ENCODE measurements at regions of chr2 and their contacts with region 1.

Region 1: GRCh38 chr2:221573430-221574230 is 1.5 kb upstream of the EPHA4 start:
- DNase-seq: peak; percentile 83 to 96
- ATAC-seq: peak; percentile 92
- H3K4me3 ChIP-seq: peak overlapping the region; percentile 46 to 66
- H3K27ac ChIP-seq: peak overlapping the region in 1 of 2 donors; percentile 41
- H3K4me1 ChIP-seq: no peaks in the 10 kb centered on the region
- H3K27me3 ChIP-seq: no peaks in the 10 kb centered on the region

Region 2: DNA sequence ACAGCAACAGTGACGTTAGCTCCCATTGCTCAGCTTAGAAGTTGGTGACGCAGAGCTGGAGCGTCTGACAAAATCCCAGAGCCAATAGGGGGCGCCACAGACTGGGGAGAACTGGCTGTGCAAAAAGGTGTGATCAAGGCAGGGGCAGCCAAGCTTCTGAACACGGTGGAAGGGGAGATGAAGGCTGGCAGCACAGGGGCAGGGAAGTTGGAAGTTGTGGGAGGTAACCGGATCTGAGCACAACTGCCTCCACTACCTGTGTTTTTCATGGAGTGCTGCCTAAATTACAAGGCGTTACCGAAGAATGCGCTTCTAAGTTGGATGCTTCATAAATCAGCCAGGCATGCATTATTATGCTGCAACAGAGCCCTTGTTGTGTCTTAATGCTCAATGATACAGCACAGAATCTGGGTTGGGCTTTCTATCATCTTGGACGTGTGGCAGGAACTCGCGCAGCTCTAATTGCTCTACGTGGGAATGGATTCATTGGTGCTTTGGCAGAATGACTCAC is 1576.2 kb before region 1 on chr2:
- intact Hi-C with region 1: loop called in 1 of 2 experiments (anchors 5 kb)
- DNase-seq: peak; percentile 63 to 82
- ATAC-seq: no peak
- H3K4me3 ChIP-seq: no peak overlapping the region
- H3K27ac ChIP-seq: no peak overlapping the region
- H3K4me1 ChIP-seq: peaks cover 0 to 1% of the 10 kb centered on the region in 2 donors
- H3K27me3 ChIP-seq: no peaks in the 10 kb centered on the region

Region 3: GRCh38 chr2:221104361-221104811 is 469.2 kb before region 1 on chr2:
- intact Hi-C with region 1: loop called in 1 of 2 experiments (anchors 5 kb)
- DNase-seq: peak; percentile 90 to 91
- ATAC-seq: peak; percentile 90
- H3K4me3 ChIP-seq: no peak overlapping the region
- H3K27ac ChIP-seq: peak overlapping the region in 1 of 2 donors; percentile 22
- H3K4me1 ChIP-seq: no peaks in the 10 kb centered on the region
- H3K27me3 ChIP-seq: no peaks in the 10 kb centered on the region

Region 4: GRCh38 chr2:221444106-221444505 is 129.5 kb before region 1 on chr2:
- intact Hi-C with region 1: loop called in 1 of 2 experiments (anchors 10 kb)
- DNase-seq: peak in 1 of 2 donors; percentile 49
- ATAC-seq: peak; percentile 59
- H3K4me3 ChIP-seq: no peak overlapping the region
- H3K27ac ChIP-seq: peak overlapping the region; percentile 48 to 76
- H3K4me1 ChIP-seq: peaks cover 0 to 3% of the 10 kb centered on the region in 2 donors
- H3K27me3 ChIP-seq: no peaks in the 10 kb centered on the region